Transverse colon (tissue), 4 donors: ENCODE measurements at regions of chr9 and their contacts with region 1.

Region 1: DNA sequence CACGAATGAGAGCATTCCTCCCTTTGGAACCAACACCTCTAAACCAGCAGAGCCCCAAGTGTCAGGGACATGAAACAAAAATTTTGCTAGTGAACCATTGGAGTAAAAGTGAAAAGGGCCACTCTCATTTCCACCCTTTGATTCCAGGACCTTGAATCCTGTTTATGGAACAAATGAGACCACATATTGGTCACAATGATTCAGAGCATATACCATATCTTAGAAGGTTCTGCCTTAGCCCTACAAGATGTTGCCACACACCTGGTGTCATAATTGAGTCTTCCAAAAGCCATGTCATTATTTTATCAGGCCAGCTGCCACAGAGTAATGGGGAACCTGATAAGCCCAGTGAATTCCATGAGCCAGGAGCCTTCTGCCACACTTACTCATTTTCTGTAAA is 66.3 kb upstream of the ZBTB43 start:
- DNase-seq: no peak
- H3K4me3 ChIP-seq: no peak overlapping the region
- H3K27ac ChIP-seq: no peak overlapping the region
- H3K4me1 ChIP-seq: no peaks in the 10 kb centered on the region
- H3K27me3 ChIP-seq: peaks cover 89% of the 10 kb centered on the region
- CTCF ChIP-seq: no peak
- EP300 ChIP-seq: no peak
- POLR2A ChIP-seq: no peak

Region 2: DNA sequence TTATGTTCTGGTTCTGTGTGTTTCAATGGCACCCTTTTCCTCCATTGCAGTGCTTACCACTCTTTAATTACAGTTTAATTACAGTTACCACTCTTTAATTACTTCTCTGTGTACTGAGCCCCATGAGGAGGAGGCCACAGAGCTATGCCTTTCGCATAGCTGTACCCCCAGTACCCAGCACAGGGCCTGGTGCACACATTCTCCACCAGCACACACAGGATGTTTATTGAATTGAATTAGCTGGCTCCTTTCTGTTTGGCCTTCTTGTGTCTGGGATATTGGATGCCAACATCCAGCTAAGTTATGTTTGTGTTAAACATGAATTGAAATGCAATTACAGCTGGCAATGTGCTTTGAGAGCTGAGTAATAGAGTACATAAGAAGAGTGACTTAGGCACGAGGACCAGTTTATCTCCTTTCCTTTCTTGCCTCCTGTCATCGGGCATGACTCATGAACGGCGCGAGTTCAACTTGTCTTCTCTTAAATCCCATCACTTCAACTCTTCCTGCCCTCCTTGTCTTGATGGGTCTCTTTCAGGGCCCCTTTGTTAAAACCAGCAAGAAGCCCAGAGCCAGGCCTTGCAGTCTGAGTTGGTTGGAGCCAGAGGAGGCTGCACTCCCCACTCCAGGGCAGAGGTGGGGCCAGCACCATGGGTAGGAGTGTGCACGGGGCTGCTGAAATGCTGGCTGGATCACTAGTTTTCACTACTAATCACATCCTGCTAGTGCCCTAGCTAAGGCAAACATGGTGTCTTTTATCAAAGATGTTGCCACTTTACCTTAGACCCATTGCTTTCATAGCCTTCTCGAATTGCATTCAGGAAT is 374.5 kb before region 1 on chr9:
- in situ Hi-C with region 1: no loop called
- intact Hi-C with region 1: loop called (anchors 5 kb)
- DNase-seq: peak; percentile 56
- H3K4me3 ChIP-seq: no peak overlapping the region
- H3K27ac ChIP-seq: peak overlapping the region; percentile 65 to 79 (median 76)
- H3K4me1 ChIP-seq: peaks cover 28 to 56% (median 38%) of the 10 kb centered on the region in 4 donors
- H3K27me3 ChIP-seq: no peaks in the 10 kb centered on the region
- CTCF ChIP-seq: no peak
- EP300 ChIP-seq: no peak
- POLR2A ChIP-seq: no peak

Region 3: GRCh38 chr9:126673689-126674364 is 64.7 kb before region 1 on chr9:
- in situ Hi-C with region 1: no loop called
- intact Hi-C with region 1: no loop called
- DNase-seq: no peak
- H3K4me3 ChIP-seq: no peak overlapping the region
- H3K27ac ChIP-seq: no peak overlapping the region
- H3K4me1 ChIP-seq: no peaks in the 10 kb centered on the region
- H3K27me3 ChIP-seq: peaks cover 98% of the 10 kb centered on the region
- CTCF ChIP-seq: no peak
- EP300 ChIP-seq: no peak
- POLR2A ChIP-seq: no peak

Region 4: GRCh38 chr9:127277099-127277498 is 538.5 kb after region 1 on chr9:
- in situ Hi-C with region 1: no loop called
- intact Hi-C with region 1: no loop called
- DNase-seq: no peak
- H3K4me3 ChIP-seq: no peak overlapping the region
- H3K27ac ChIP-seq: no peak overlapping the region
- H3K4me1 ChIP-seq: peaks cover 0 to 5% (median 0%) of the 10 kb centered on the region in 4 donors
- H3K27me3 ChIP-seq: no peaks in the 10 kb centered on the region
- CTCF ChIP-seq: no peak
- EP300 ChIP-seq: no peak
- POLR2A ChIP-seq: no peak

Region 5: GRCh38 chr9:128333451-128333869 is 1594.9 kb after region 1 on chr9:
- in situ Hi-C with region 1: no loop called
- intact Hi-C with region 1: loop called (anchors 5 kb)
- DNase-seq: no peak
- H3K4me3 ChIP-seq: no peak overlapping the region
- H3K27ac ChIP-seq: no peak overlapping the region
- H3K4me1 ChIP-seq: peaks cover 0 to 6% (median 3%) of the 10 kb centered on the region in 4 donors
- H3K27me3 ChIP-seq: no peaks in the 10 kb centered on the region
- CTCF ChIP-seq: no peak
- EP300 ChIP-seq: no peak
- POLR2A ChIP-seq: no peak